A673 (cell line): ENCODE measurements at regions of chr12 and their contacts with region 1.

Region 1: GRCh38 chr12:59087077-59087673 is 166.9 kb upstream of the LRIG3 start:
- DNase-seq: no peak
- H3K4me3 ChIP-seq: no peak overlapping the region
- H3K27ac ChIP-seq: no peak overlapping the region
- H3K4me1 ChIP-seq: peaks cover 18% of the 10 kb centered on the region
- H3K27me3 ChIP-seq: no peaks in the 10 kb centered on the region
- CTCF ChIP-seq: peak; percentile 54

Region 2: GRCh38 chr12:58741226-58741625 is 345.9 kb before region 1 on chr12:
- CTCF ChIA-PET with region 1: no interaction called
- POLR2A ChIA-PET with region 1: no interaction called
- intact Hi-C with region 1: no loop called
- DNase-seq: no peak
- H3K4me3 ChIP-seq: no peak overlapping the region
- H3K27ac ChIP-seq: no peak overlapping the region
- H3K4me1 ChIP-seq: no peaks in the 10 kb centered on the region
- H3K27me3 ChIP-seq: no peaks in the 10 kb centered on the region
- CTCF ChIP-seq: 0 out of 2 replicates have a peak, but pooled peaks have one; percentile 17

Region 3: DNA sequence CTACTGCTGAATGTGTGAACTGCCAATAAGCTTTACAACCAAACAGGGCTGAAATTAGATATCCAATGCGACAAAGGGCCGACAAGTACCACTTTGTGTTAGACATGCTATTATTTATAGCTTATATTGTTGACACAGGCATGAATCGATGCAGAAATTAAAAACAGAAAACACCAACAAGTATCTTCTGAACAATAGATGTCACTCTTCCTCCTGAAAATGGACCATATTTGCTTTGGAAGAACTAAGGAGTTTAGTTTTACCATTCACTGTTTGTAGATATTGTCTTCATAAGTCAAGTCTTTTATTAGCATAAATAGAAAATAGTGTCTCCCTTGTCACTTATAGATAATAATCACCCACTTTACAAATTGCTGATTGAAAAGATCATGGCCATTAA is 253.3 kb before region 1 on chr12:
- CTCF ChIA-PET with region 1: no interaction called
- POLR2A ChIA-PET with region 1: no interaction called
- intact Hi-C with region 1: loop called (anchors 10 kb)
- DNase-seq: peak; percentile 8
- H3K4me3 ChIP-seq: no peak overlapping the region
- H3K27ac ChIP-seq: no peak overlapping the region
- H3K4me1 ChIP-seq: no peaks in the 10 kb centered on the region
- H3K27me3 ChIP-seq: no peaks in the 10 kb centered on the region
- CTCF ChIP-seq: 0 out of 2 replicates have a peak, but pooled peaks have one; percentile 35

Region 4: GRCh38 chr12:59472273-59472672 is 385.1 kb after region 1 on chr12:
- CTCF ChIA-PET with region 1: no interaction called
- POLR2A ChIA-PET with region 1: no interaction called
- intact Hi-C with region 1: no loop called
- DNase-seq: no peak
- H3K4me3 ChIP-seq: no peak overlapping the region
- H3K27ac ChIP-seq: no peak overlapping the region
- H3K4me1 ChIP-seq: no peaks in the 10 kb centered on the region
- H3K27me3 ChIP-seq: no peaks in the 10 kb centered on the region
- CTCF ChIP-seq: no peak